ENCODE measurements at regions of chr5 and their contacts with region 1.

Region 1: DNA sequence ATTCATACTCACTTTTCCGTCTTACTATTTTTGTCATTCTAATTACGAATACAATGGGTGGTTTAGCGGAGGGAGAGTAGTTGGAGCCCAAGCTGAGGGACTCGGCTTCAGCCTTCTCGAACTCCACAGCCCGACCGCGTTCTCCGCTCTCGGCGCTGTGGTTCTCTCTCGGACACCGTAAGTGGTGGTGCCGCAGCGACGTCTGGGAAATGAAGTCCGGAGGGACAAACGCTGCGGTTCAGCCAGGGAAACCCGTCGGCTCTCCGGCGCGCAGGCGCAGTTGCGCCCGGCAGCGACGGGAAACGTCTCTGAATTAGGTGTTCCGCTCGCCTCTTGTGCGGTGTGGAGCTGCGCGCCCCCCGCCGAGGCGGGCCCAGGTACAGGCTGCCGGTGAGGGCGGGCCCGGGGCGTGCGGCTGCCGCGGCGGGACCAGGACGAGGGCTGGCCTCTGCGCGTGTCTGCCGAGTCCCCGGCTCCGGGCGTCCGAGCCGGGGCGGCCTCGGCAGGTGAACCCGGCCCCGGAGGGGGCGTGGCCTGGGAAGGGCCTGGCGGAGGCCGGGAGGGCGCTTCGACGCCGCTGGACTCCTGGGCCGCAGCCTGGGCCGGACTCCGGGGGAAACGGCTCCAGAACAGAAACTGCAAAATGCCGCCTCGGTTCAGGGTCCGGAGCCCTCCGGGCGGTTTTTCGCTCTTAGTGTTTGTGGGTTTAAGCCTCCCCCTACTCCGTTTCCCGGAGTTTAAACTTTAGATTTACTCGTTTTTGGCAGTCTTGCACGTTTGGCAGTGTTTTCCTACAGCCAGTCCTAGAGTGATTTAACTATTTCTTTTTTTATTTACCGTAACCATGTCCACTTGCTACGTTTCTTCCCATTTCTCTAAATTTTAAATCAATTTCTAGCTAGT is at the start of gene ZNF879:
- DNase-seq: peak; percentile 95 to 97 (median 96)
- ATAC-seq: peak; percentile 95 to 99 (median 99)
- H3K4me3 ChIP-seq: peak within 1 kb of the TSS; percentile 38 to 99 (median 79)
- H3K27ac ChIP-seq: peak within 1 kb of the TSS; percentile 53 to 96 (median 87)
- H3K4me1 ChIP-seq: peaks cover 0 to 18% (median 10%) of the 10 kb centered on the region in 12 donors
- H3K27me3 ChIP-seq: no peaks in the 10 kb centered on the region
- CTCF ChIP-seq: no peak
- POLR2A ChIP-seq: peak in 1 of 2 donors; percentile 59
- total RNA-seq, gene ZNF879: 2.8 to 4.5 (median 3.3) TPM

Region 2: DNA sequence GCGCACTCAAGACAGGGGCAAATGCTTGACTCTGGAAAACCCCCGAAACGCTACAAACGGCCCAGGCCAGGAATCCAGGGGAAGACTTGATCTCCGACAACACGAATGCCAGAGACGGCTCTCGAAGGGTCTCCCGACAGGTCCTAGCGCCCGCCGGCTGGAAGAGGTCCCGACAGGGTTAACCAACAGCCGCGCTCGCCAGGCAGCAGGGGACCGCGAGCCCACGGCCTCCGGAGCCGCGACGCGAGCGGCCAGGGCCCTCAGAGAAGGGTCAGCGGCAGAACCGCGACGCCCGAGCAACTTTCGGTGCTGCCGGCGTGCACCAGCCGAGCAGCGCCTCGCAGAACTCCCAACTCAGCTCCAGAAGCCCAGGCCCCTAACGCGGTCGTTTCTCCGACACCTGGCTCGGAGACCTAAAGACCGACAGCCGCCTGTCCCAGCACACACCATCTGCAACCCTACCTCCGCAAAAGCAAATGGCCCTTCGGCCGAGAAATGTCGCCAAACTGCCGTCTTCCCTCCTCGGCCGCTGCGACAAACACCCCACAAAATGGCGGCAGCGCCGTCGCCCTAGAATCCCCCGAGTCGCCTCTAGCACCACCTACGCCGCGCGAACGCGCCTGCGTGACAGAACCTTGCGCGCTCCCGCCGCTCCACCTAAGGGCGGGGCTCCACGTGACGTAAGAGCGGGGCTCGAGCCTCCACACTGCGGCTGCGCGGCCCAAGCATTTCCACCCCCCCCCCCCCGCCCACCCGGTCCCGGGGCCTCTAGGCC is 397.1 kb before region 1 on chr5 and contains the start of gene CLK4:
- intact Hi-C with region 1: loop called in 1 of 10 experiments (anchors 5 kb)
- DNase-seq: peak; percentile 96 to 99 (median 97)
- ATAC-seq: peak; percentile 95 to 98 (median 97)
- H3K4me3 ChIP-seq: peak within 1 kb of the TSS; percentile 58 to 98 (median 84)
- H3K27ac ChIP-seq: peak within 1 kb of the TSS; percentile 87 to 99 (median 98)
- H3K4me1 ChIP-seq: peaks cover 12 to 41% (median 33%) of the 10 kb centered on the region in 12 donors
- H3K27me3 ChIP-seq: no peaks in the 10 kb centered on the region
- CTCF ChIP-seq: no peak
- POLR2A ChIP-seq: peak in 1 of 2 donors; percentile 79
- total RNA-seq, gene CLK4: 9.9 to 24.0 (median 16.3) TPM

Region 3: GRCh38 chr5:179060116-179061008 is 36.6 kb after region 1 on chr5 and contains the start of gene ZNF354C:
- intact Hi-C with region 1: loop called in 2 of 10 experiments (anchors 1 to 5 kb)
- DNase-seq: peak; percentile 92 to 96 (median 94)
- ATAC-seq: peak; percentile 99
- H3K4me3 ChIP-seq: peak within 1 kb of the TSS; percentile 51 to 95 (median 78)
- H3K27ac ChIP-seq: peak within 1 kb of the TSS in 11 of 12 donors; percentile 45 to 86 (median 82)
- H3K4me1 ChIP-seq: peaks cover 0 to 19% (median 9%) of the 10 kb centered on the region in 12 donors
- H3K27me3 ChIP-seq: no peaks in the 10 kb centered on the region
- CTCF ChIP-seq: peak in 1 of 12 donors; percentile 18
- POLR2A ChIP-seq: peak in 1 of 2 donors; percentile 87
- total RNA-seq, gene ZNF354C: 3.5 to 5.7 (median 4.1) TPM

Measured in heart left ventricle (tissue), 16 donors.